ENCODE measurements at regions of chr20 and their contacts with region 1.

Region 1: DNA sequence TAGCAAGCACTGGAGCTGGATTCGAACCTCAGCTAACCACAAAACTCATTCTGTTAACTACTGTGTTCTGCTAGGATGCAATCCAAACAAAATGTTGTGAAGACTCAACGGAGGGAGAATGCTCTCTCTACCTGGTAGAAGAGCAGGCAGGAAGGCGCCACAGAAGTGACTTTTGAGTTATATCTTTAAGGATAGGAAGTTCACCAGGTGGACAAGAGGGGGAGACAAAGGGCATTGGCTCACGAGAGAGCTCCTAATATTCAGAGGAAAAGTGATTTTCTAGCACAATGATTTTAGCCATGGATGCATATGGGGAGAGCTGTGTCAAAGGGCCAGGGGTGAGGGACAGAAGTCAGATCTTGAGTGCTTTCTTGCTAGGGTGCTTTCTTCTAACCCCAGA is 108.4 kb upstream of the MAFB start:
- DNase-seq: peak; percentile 25 to 58 (median 48)
- H3K4me3 ChIP-seq: no peak overlapping the region
- H3K27ac ChIP-seq: no peak overlapping the region
- H3K4me1 ChIP-seq: no peaks in the 10 kb centered on the region
- H3K27me3 ChIP-seq: peaks cover 0 to 6% (median 2%) of the 10 kb centered on the region in 5 experiments

Region 2: GRCh38 chr20:40156600-40157317 is 640.7 kb before region 1 on chr20:
- CTCF ChIA-PET with region 1: no interaction called
- POLR2A ChIA-PET with region 1: no interaction called
- DNase-seq: no peak
- H3K4me3 ChIP-seq: no peak overlapping the region
- H3K27ac ChIP-seq: no peak overlapping the region
- H3K4me1 ChIP-seq: no peaks in the 10 kb centered on the region
- H3K27me3 ChIP-seq: peaks cover 0 to 5% (median 2%) of the 10 kb centered on the region in 5 experiments

Region 3: DNA sequence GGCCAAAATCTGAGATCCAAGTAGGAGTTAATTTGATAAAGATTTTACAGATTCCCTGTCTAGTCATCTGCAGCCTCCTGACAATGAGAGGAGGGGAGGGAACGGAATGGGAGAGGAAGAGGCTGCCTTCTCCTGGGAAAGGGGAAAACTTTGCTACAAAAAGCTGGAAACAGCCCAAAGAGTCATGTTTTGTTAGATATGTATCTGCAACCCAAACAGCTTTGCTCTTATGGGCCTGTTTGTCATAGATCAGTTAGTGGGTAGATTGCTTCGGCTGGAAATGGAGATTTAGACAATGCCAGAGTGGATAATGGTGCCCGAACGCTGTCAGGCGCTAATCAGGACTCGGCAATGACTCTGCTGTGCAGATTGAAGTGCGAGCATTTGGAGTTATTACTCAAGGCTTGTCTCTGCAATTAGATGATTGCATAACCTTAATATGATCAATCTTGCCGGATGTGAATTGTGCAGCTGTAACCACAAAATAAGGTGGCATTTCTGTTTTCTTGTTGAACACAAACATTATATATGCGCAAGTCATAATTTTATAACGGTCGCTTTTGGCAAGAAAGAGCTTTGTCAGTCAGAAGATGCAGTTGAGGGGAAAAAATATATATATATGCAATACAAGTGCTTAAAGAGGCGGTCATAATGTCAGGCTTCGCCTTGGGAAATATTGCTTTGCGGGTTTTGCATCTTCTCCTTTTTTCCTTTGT is 15.9 kb before region 1 on chr20:
- CTCF ChIA-PET with region 1: interaction called, 10 read pairs
- POLR2A ChIA-PET with region 1: no interaction called
- DNase-seq: peak in 2 of 3 donors; percentile 49 to 62
- H3K4me3 ChIP-seq: no peak overlapping the region
- H3K27ac ChIP-seq: no peak overlapping the region
- H3K4me1 ChIP-seq: peaks cover 3 to 11% (median 6%) of the 10 kb centered on the region in 4 experiments
- H3K27me3 ChIP-seq: peaks cover 0 to 8% (median 0%) of the 10 kb centered on the region in 5 experiments

Region 4: DNA sequence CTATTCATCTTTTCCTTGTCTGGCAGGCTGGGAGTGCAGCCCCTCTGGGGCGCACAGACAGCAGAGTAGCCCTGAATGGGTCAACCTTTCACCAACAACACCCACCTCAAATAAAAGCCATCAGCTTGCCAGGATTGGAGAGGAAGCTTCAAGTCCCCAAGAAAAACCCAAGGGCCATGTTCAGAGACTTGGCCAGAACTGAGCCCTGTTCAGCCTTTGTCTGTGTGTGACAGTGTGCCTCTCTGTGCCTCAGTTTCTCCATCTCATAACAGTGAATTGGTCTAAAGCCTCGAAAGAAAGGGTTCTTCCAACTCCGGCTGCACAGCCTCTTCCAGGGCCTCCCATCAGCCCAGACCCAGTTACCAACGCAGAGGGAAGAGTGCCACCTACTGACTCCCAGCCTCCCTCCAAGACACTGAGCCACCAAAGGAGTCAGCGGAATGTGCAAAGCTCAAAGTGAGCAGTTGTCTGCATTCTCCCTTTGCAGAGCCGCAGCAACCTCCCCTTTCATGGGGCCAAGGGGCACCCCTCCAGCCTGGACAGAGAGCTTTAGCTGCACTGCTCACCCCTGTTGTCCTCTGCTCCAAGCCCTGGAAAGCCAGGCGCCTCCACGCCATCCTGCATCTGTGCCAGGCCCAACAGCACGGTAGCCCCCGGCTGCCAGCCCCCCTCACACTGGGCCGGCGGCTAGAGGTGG is 148.5 kb after region 1 on chr20:
- CTCF ChIA-PET with region 1: interaction called, 17 read pairs
- POLR2A ChIA-PET with region 1: no interaction called
- DNase-seq: peak; percentile 40 to 69 (median 57)
- H3K4me3 ChIP-seq: no peak overlapping the region
- H3K27ac ChIP-seq: no peak overlapping the region
- H3K4me1 ChIP-seq: peaks cover 0 to 27% (median 9%) of the 10 kb centered on the region in 4 experiments
- H3K27me3 ChIP-seq: no peaks in the 10 kb centered on the region

Region 5: GRCh38 chr20:40962730-40963504 is 165.5 kb after region 1 on chr20:
- CTCF ChIA-PET with region 1: interaction called, 22 read pairs
- POLR2A ChIA-PET with region 1: no interaction called
- DNase-seq: peak; percentile 58 to 80 (median 72)
- H3K4me3 ChIP-seq: peak overlapping the region in 1 of 7 experiments; percentile 14
- H3K27ac ChIP-seq: no peak overlapping the region
- H3K4me1 ChIP-seq: peaks cover 0 to 15% (median 8%) of the 10 kb centered on the region in 4 experiments
- H3K27me3 ChIP-seq: no peaks in the 10 kb centered on the region